Left lung (tissue), 14 donors: ENCODE measurements at regions of chr10 and their contacts with region 1.

Region 1: DNA sequence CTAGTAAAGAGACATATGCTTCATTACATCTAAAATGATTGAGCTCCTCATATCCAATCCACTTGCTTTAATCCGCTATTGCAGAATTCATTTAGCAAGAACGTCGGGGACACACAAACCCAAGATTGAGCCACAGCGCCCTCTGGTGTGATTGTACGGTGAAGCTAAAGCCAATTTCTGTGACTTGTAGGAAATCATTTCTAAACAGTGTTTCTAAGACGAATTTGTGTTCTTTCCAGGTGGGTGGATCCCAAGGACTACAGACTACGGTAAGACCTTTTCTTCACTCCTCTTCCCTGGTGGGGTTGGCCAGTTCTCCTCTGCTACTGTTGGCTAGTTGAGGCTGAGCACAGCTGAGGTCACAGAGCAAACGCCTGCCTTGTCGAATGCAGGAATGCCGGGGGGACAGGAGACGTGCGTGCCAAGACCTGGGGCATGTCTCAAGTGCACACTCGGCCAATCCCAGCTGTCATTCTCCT is 5.2 kb downstream of the DMBT1 start:
- DNase-seq: peak in 3 of 4 donors; percentile 70 to 84 (median 76)
- ATAC-seq: peak; percentile 76
- H3K4me3 ChIP-seq: no peak overlapping the region
- H3K27ac ChIP-seq: no peak overlapping the region
- H3K4me1 ChIP-seq: peaks cover 2 to 5% of the 10 kb centered on the region in 2 donors
- H3K27me3 ChIP-seq: peaks cover 0 to 4% of the 10 kb centered on the region in 2 donors
- CTCF ChIP-seq: peak; percentile 66 to 79

Region 2: GRCh38 chr10:122298598-122299301 is 267.0 kb before region 1 on chr10:
- intact Hi-C with region 1: loop called in 1 of 2 experiments (anchors 5 kb)
- DNase-seq: peak in 2 of 4 donors; percentile 59 to 80
- ATAC-seq: peak; percentile 93
- H3K4me3 ChIP-seq: no peak overlapping the region
- H3K27ac ChIP-seq: no peak overlapping the region
- H3K4me1 ChIP-seq: peaks cover 0 to 4% of the 10 kb centered on the region in 2 donors
- H3K27me3 ChIP-seq: no peaks in the 10 kb centered on the region
- CTCF ChIP-seq: peak; percentile 86 to 89

Region 3: DNA sequence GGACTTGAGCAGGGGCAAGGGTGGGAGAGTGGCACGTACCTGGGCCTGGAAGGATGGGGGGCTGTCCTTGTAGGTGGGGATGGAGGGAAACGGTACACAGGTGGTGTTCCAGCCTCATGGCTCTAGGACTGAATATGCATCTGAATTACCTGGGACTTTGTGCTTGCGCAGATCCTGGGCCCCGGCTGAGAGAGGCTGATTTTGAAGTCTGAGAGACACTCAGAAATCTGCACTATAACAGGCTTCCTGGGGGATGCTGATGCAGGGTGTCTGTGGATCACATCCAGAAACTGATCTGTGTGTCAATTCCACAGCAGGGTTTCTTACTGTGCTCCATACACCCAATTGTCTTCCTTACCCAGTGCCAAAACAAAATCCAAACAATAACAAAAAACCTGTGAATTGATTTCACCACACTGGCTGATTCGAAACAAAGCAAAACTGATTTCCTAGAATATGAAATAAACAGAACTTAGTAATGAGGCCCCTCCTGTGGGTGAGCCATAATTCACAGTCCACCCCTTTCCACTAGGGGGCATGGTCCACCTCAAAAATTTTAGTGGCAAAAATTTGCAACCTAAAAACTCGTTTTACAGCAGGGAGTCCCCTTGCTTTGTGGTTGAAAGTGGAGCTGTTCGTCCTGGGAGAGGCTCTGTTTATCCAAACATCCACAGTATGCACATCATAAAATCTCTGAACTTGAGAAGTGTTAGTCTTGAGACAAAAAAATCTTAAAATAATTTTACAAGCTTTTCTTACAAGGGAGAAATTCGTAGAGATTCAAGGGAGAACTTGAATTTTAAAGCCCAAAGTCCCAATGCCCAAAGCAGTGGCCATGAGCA is 223.3 kb before region 1 on chr10:
- intact Hi-C with region 1: loop called in 1 of 2 experiments (anchors 10 kb)
- DNase-seq: peak in 2 of 4 donors; percentile 16 to 40
- ATAC-seq: peak; percentile 86
- H3K4me3 ChIP-seq: no peak overlapping the region
- H3K27ac ChIP-seq: peak overlapping the region in 1 of 2 donors; percentile 13
- H3K4me1 ChIP-seq: no peaks in the 10 kb centered on the region
- H3K27me3 ChIP-seq: no peaks in the 10 kb centered on the region
- CTCF ChIP-seq: peak; percentile 70 to 84

Region 4: GRCh38 chr10:122746408-122746807 is 180.6 kb after region 1 on chr10:
- intact Hi-C with region 1: no loop called
- DNase-seq: no peak
- ATAC-seq: no peak
- H3K4me3 ChIP-seq: no peak overlapping the region
- H3K27ac ChIP-seq: no peak overlapping the region
- H3K4me1 ChIP-seq: no peaks in the 10 kb centered on the region
- H3K27me3 ChIP-seq: peaks cover 0 to 21% of the 10 kb centered on the region in 2 donors
- CTCF ChIP-seq: no peak

Region 5: GRCh38 chr10:122999347-122999746 is 433.6 kb after region 1 on chr10:
- intact Hi-C with region 1: no loop called
- DNase-seq: no peak
- ATAC-seq: no peak
- H3K4me3 ChIP-seq: no peak overlapping the region
- H3K27ac ChIP-seq: no peak overlapping the region
- H3K4me1 ChIP-seq: peaks cover 0 to 5% of the 10 kb centered on the region in 2 donors
- H3K27me3 ChIP-seq: no peaks in the 10 kb centered on the region
- CTCF ChIP-seq: no peak

Region 6: GRCh38 chr10:123043409-123043925 is 477.7 kb after region 1 on chr10:
- intact Hi-C with region 1: no loop called
- DNase-seq: peak in 2 of 4 donors; percentile 24 to 54
- ATAC-seq: peak; percentile 83
- H3K4me3 ChIP-seq: no peak overlapping the region
- H3K27ac ChIP-seq: no peak overlapping the region
- H3K4me1 ChIP-seq: peaks cover 0 to 3% of the 10 kb centered on the region in 2 donors
- H3K27me3 ChIP-seq: no peaks in the 10 kb centered on the region
- CTCF ChIP-seq: peak; percentile 40 to 42